ENCODE measurements at regions of chr7 and their contacts with region 1.

Region 1: DNA sequence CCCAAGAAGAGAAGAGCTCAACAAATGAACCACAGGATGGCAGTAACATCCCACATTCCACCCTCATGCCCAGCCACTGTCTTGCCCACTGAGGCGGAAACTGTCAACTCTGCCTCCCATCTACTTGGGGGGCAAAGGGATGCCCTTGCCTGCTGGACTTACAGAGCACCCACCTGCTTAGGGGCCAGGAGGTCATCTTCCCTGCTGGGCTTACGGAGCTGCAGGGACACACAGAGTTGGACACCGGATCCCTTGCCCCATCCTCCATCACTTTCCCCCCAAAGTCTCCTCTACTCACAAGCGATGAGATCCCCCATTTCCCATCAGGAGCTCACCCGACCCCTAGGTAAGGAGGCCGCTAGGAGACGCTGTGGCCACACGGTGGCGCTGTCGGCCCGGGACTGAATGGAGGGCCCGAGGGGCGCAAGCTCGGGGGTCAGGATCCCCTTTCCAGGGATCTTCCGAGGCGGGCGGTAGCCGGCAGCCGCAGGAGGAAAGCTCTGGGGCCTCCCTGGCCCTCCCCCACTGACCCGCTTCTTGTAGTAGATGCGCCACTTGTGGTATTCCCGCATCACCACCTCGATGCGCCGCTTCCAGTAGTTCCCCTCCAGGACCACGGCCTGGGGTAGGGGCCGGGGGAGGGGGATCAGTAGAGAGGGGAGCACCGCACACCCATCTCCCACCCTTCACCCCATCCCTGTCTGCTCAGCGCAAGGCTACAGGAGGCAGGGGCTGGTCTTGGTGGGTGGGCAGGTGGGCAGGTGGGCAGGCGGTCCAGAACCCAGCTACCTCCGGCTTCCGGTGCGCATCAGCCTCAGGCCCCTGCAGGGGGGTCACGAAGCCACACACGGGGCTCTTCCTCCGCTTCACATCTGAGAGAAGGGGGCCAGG is 17.3 kb downstream of the MLXIPL start:
- DNase-seq: peak; percentile 51
- H3K4me3 Mint-ChIP-seq: no peak overlapping the region
- H3K27ac Mint-ChIP-seq: no peak overlapping the region
- H3K4me1 Mint-ChIP-seq: peaks cover 6% of the 10 kb centered on the region
- H3K27me3 Mint-ChIP-seq: no peaks in the 10 kb centered on the region
- CTCF ChIP-seq: peak; percentile 95

Region 2: GRCh38 chr7:73454424-73454823 is 152.6 kb before region 1 on chr7:
- CTCF ChIA-PET with region 1: no interaction called
- POLR2A ChIA-PET with region 1: no interaction called
- intact Hi-C with region 1: no loop called
- DNase-seq: no peak
- H3K4me3 Mint-ChIP-seq: no peak overlapping the region
- H3K27ac Mint-ChIP-seq: no peak overlapping the region
- H3K4me1 Mint-ChIP-seq: no peaks in the 10 kb centered on the region
- H3K27me3 Mint-ChIP-seq: no peaks in the 10 kb centered on the region
- CTCF ChIP-seq: no peak

Region 3: GRCh38 chr7:73593207-73594045 is 13.6 kb before region 1 on chr7:
- CTCF ChIA-PET with region 1: interaction called, 12 read pairs
- POLR2A ChIA-PET with region 1: no interaction called
- intact Hi-C with region 1: no loop called
- DNase-seq: no peak
- H3K4me3 Mint-ChIP-seq: no peak overlapping the region
- H3K27ac Mint-ChIP-seq: no peak overlapping the region
- H3K4me1 Mint-ChIP-seq: no peaks in the 10 kb centered on the region
- H3K27me3 Mint-ChIP-seq: peaks cover 11% of the 10 kb centered on the region
- CTCF ChIP-seq: no peak

Region 4: GRCh38 chr7:73635428-73636200 is 28.6 kb after region 1 on chr7:
- CTCF ChIA-PET with region 1: interaction called, 13 read pairs
- POLR2A ChIA-PET with region 1: no interaction called
- intact Hi-C with region 1: no loop called
- DNase-seq: no peak
- H3K4me3 Mint-ChIP-seq: no peak overlapping the region
- H3K27ac Mint-ChIP-seq: peak overlapping the region; percentile 61
- H3K4me1 Mint-ChIP-seq: peaks cover 13% of the 10 kb centered on the region
- H3K27me3 Mint-ChIP-seq: no peaks in the 10 kb centered on the region
- CTCF ChIP-seq: no peak

Region 5: GRCh38 chr7:73683056-73683964 is 76.3 kb after region 1 on chr7 and contains the starts of genes BUD23 and DNAJC30:
- CTCF ChIA-PET with region 1: interaction called, 10 read pairs
- POLR2A ChIA-PET with region 1: no interaction called
- intact Hi-C with region 1: no loop called
- DNase-seq: peak; percentile 97
- H3K4me3 Mint-ChIP-seq: peak within 1 kb of the TSS; percentile 94
- H3K27ac Mint-ChIP-seq: peak within 1 kb of the TSS; percentile 97
- H3K4me1 Mint-ChIP-seq: peaks cover 18% of the 10 kb centered on the region
- H3K27me3 Mint-ChIP-seq: no peaks in the 10 kb centered on the region
- CTCF ChIP-seq: no peak
- total RNA-seq, gene BUD23: 71.5 and 81.9 TPM in 2 replicates
- total RNA-seq, gene DNAJC30: 11.0 and 11.4 TPM in 2 replicates

Region 6: GRCh38 chr7:73738612-73739374 is 131.7 kb after region 1 on chr7 and contains the start of gene ABHD11:
- CTCF ChIA-PET with region 1: interaction called, 67 read pairs
- POLR2A ChIA-PET with region 1: no interaction called
- intact Hi-C with region 1: loop called (anchors 2 kb)
- DNase-seq: peak; percentile 94
- H3K4me3 Mint-ChIP-seq: peak within 1 kb of the TSS; percentile 91
- H3K27ac Mint-ChIP-seq: peak within 1 kb of the TSS; percentile 94
- H3K4me1 Mint-ChIP-seq: peaks cover 14% of the 10 kb centered on the region
- H3K27me3 Mint-ChIP-seq: no peaks in the 10 kb centered on the region
- CTCF ChIP-seq: no peak
- total RNA-seq, gene ABHD11: 15.3 and 18.9 TPM in 2 replicates

Region 7: GRCh38 chr7:73921623-73922528 is 314.8 kb after region 1 on chr7:
- CTCF ChIA-PET with region 1: no interaction called
- POLR2A ChIA-PET with region 1: no interaction called
- intact Hi-C with region 1: no loop called
- DNase-seq: no peak
- H3K4me3 Mint-ChIP-seq: no peak overlapping the region
- H3K27ac Mint-ChIP-seq: no peak overlapping the region
- H3K4me1 Mint-ChIP-seq: no peaks in the 10 kb centered on the region
- H3K27me3 Mint-ChIP-seq: peaks cover 63% of the 10 kb centered on the region
- CTCF ChIP-seq: no peak